Posterior cingulate gyrus (tissue), 11 donors: ENCODE measurements at regions of chr9 and their contacts with region 1.

Region 1: DNA sequence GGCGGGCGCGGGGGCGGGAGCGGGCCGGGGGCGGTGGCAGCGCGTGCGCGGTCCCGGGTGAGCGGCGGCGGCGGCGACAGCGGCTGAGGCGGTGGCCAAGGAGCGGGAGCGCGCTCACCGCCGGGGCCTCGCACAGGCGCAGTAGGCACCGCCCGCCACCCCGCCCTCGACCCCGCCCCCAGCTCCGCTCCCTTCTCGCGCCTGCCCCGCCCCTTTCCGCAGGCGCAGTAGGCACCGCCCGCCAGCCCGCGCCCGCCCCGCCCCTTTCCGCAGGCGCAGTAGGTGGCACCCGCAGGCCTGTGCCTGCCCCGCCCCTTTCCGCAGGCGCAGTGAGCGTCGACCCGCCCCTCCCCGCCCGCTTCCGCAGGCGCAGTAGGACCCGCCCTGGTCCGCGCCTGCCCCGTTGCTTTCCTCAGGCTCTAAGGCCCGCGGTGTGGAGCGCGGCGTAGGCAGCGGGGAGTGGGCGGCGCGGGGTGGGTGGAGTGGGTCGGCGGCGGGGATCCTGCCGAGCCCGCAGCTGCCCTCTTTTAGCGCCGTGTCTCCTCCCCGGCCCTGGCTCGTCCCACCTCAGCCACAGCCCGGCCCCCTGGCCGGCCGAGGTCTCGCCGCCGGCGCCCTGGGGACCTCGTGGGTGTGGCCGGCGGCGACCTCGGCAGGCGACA is at the start of gene CAMSAP1:
- DNase-seq: peak; percentile 81 to 98 (median 86)

Region 2: DNA sequence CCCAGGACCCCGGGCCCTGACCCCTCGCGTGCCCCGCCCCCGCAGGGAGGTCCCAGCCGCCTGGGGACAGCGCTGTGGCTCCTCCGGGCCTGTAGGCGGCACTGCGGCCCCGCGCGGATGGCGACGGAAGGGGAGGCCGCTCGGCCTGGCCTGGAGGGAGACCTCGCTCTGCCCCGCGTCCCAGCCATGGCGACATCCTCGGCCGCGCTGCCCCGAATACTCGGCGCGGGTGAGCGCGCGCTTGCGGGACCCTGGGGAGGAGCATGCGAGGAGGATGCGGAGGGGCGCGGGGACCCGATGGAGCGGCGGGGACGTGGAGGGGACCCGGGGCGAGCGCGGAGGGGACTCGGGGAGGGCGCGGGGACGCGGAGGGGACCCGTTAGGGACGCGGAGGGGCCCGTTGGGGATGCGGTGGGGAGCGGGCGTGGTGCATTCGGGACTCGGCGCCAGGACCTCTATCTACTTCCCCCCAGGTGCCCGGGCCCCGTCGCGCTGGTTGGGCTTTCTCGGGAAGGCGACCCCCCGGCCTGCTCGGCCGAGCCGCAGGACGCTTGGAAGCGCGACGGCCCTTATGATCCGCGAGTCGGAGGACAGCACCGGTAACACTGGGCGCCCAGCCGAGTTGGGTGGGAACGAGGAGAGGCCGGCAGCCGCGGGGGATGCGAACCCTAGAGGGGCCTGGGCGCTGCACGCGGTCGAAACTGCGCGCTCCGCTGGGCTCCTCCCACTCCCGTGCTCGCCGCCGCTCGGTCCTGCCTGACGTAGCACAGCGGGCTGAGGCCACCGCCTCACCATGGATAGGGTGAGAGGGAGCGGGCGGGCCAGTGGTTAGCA is 406.8 kb before region 1 on chr9 and contains the start of gene MRPS2:
- intact Hi-C with region 1: loop called (anchors 5 kb)
- DNase-seq: peak; percentile 75 to 98 (median 86)

Region 3: DNA sequence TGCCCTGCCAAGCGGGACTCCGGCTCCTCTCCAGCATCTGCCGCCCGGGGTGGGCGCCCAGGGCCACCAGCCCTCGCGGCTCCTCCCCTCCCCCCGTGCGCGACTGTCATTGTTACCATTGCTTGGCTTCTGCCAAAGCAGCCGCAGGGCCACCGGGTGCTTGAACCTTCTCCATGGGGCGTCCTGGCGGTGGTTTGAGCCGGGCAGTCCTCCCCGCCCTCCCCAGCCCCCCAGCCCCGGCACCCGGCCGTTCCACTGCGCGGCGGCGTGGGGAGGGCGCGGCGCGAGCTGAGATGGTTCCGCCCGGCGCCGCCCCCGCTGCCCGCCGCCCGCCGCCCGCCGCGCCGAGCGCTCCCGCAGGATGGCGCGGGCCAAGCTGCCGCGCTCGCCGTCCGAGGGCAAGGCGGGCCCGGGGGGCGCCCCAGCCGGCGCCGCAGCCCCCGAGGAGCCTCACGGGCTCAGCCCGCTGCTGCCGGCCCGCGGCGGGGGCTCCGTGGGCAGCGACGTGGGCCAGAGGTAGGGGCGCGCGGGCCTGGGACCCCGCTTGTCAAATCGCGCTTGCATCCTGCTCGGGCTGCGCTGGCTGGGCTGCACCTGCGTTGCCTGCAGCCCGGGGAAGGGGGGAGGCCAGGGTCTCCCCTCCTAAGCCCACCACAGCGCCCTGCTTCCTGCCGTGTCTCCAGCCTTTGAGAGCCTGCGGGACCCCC is 171.1 kb before region 1 on chr9:
- intact Hi-C with region 1: no loop called
- DNase-seq: no peak

Region 4: GRCh38 chr9:135864447-135865049 is 43.0 kb before region 1 on chr9:
- intact Hi-C with region 1: loop called (anchors 2 kb)
- DNase-seq: peak in 9 of 10 donors; percentile 56 to 95 (median 84)

Region 5: GRCh38 chr9:135961277-135961705 is 53.7 kb after region 1 on chr9 and contains the start of gene UBAC1:
- intact Hi-C with region 1: loop called (anchors 2 kb)
- DNase-seq: peak; percentile 94 to 100 (median 96)